ENCODE measurements at regions of chr10 and their contacts with region 1.

Region 1: DNA sequence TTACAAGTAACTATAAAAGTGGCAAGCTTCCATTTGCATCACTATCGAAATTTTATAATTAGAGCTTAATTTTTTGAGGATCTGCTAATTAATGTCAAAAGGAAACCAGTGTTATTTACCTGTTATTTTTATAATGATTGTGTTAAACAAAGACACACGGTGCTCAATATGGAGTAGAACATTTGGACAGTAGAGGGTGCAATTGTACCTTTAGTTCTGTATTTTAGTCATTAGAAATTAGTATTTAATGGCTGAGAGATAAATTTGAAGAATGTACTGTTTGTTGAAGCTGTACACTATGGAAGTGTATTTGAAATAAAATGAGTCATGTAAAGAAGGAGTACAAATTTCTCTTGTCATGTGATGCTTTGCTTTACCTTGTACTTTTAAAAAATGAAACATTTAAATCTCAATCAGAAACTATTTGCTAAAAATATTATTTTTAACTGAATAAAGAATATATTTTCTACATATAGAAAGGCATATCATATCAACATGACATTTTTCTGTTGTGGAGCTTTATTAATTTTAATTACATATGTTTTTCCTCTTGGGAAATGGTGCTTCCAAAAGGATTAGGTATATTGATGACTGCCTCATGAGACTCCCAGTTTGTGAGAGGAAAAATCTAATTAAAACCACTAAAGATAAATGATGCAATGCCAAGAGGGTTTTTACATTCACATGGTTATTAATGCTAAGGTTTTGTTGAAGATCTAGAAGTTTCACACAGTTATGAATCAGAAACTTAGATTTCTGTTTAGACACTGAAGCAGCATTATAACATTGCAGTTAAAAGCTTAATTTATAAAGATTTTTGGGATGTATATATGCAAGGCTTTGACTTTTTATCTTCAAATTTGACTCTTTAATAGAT is 10.4 kb upstream of the PRKG1 start:
- DNase-seq: peak; percentile 40 to 72 (median 64)
- H3K4me3 ChIP-seq: no peak overlapping the region
- H3K27ac ChIP-seq: no peak overlapping the region
- H3K4me1 ChIP-seq: peaks cover 0 to 6% (median 0%) of the 10 kb centered on the region in 4 experiments
- H3K27me3 ChIP-seq: peaks cover 0 to 1% (median 0%) of the 10 kb centered on the region in 5 experiments

Region 2: GRCh38 chr10:50291261-50291850 is 772.5 kb before region 1 on chr10:
- CTCF ChIA-PET with region 1: no interaction called
- POLR2A ChIA-PET with region 1: no interaction called
- DNase-seq: peak; percentile 43 to 65 (median 59)
- H3K4me3 ChIP-seq: no peak overlapping the region
- H3K27ac ChIP-seq: no peak overlapping the region
- H3K4me1 ChIP-seq: peaks cover 0 to 10% (median 0%) of the 10 kb centered on the region in 4 experiments
- H3K27me3 ChIP-seq: peaks cover 0 to 3% (median 0%) of the 10 kb centered on the region in 5 experiments

Region 3: DNA sequence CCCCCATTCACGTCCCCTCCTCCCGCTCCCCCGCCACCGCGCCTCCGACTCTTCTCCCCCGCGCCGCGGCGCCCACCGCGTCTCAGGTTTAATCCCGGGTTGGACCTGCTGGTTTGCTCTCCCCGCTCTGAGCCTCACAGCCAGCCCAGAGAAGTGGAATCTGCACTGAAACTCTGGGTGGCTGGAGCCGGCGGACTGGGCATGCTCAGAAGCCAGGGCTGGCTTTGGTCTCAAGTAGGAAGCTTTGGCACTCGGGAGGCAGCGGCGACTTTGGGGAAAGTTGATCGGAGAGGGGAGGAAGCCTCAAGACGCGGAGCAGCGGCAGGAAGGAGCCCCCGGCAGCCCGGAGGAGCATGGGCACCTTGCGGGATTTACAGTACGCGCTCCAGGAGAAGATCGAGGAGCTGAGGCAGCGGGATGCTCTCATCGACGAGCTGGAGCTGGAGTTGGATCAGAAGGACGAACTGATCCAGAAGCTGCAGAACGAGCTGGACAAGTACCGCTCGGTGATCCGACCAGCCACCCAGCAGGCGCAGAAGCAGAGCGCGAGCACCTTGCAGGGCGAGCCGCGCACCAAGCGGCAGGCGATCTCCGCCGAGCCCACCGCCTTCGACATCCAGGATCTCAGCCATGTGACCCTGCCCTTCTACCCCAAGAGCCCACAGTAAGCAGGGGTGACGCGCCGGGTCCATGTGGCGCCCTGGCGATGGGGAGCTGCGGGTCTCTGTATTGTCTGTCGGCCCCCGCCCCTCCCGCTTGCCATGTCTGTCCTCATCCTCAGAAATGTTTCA is 10.5 kb after region 1 on chr10 and contains the start of gene PRKG1:
- CTCF ChIA-PET with region 1: interaction called, 13 read pairs
- POLR2A ChIA-PET with region 1: no interaction called
- DNase-seq: peak; percentile 49 to 86 (median 81)
- H3K4me3 ChIP-seq: peak within 1 kb of the TSS; percentile 43 to 81 (median 73)
- H3K27ac ChIP-seq: no peak within 1 kb of the TSS
- H3K4me1 ChIP-seq: peaks cover 3 to 27% (median 16%) of the 10 kb centered on the region in 4 experiments
- H3K27me3 ChIP-seq: peaks cover 2 to 34% (median 19%) of the 10 kb centered on the region in 5 experiments

Region 4: GRCh38 chr10:51422311-51423120 is 358.6 kb after region 1 on chr10:
- CTCF ChIA-PET with region 1: interaction called, 45 read pairs
- POLR2A ChIA-PET with region 1: no interaction called
- DNase-seq: peak; percentile 51 to 84 (median 79)
- H3K4me3 ChIP-seq: no peak overlapping the region
- H3K27ac ChIP-seq: no peak overlapping the region
- H3K4me1 ChIP-seq: no peaks in the 10 kb centered on the region
- H3K27me3 ChIP-seq: peaks cover 0 to 3% (median 0%) of the 10 kb centered on the region in 5 experiments

Measured in common myeloid progenitor, CD34-positive (primary cell).